CD4-positive, alpha-beta memory T cell (primary cell): ENCODE measurements at regions of chr20 and their contacts with region 1.

Region 1: GRCh38 chr20:36199345-36200257 is 36.7 kb upstream of the AAR2 start:
- DNase-seq: peak; percentile 50 to 62 (median 58)
- H3K4me3 ChIP-seq: no peak overlapping the region
- H3K4me3 Mint-ChIP-seq: no peak overlapping the region
- H3K27ac ChIP-seq: no peak overlapping the region
- H3K27ac Mint-ChIP-seq: no peak overlapping the region
- H3K4me1 ChIP-seq: peaks cover 3% of the 10 kb centered on the region
- H3K4me1 Mint-ChIP-seq: peaks cover 3 to 6% (median 4%) of the 10 kb centered on the region in 4 donors
- H3K27me3 ChIP-seq: no peaks in the 10 kb centered on the region
- H3K27me3 Mint-ChIP-seq: peaks cover 6 to 16% of the 10 kb centered on the region in 2 donors

Region 2: DNA sequence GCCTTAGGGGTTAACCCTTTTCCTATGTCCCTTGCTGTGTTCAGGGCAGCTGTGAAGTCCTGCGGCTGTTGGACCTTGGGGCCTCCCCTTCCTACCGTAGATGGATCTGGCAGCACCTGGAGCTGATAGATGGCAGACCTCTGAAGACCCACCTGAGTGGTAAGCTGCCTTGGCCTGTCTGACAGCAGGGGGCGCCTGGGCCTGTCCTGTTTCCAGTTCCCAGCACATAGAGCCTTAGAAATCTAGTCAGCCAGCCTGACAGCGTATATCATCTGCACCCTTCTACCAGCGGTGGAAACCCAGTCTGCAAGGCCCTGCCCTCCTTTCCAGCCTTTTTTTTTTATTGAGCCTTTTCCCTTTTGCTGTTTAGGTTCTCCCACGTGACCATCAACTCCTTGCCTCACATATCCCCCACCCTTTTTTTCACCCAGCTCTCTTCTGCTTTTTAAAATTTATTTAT is 204.6 kb before region 1 on chr20:
- CTCF ChIA-PET with region 1: interaction called, 14 read pairs
- POLR2A ChIA-PET with region 1: no interaction called
- intact Hi-C with region 1: loop called (anchors 1 kb)
- DNase-seq: peak; percentile 70 to 74 (median 71)
- H3K4me3 ChIP-seq: no peak overlapping the region
- H3K4me3 Mint-ChIP-seq: peak overlapping the region in 1 of 8 donors; percentile 2
- H3K27ac ChIP-seq: no peak overlapping the region
- H3K27ac Mint-ChIP-seq: peak overlapping the region in 2 of 7 donors; percentile 42 to 48
- H3K4me1 ChIP-seq: peaks cover 3% of the 10 kb centered on the region
- H3K4me1 Mint-ChIP-seq: peaks cover 5 to 8% (median 6%) of the 10 kb centered on the region in 4 donors
- H3K27me3 ChIP-seq: no peaks in the 10 kb centered on the region
- H3K27me3 Mint-ChIP-seq: peaks cover 3 to 5% of the 10 kb centered on the region in 2 donors

Region 3: GRCh38 chr20:36183155-36183944 is 16.3 kb before region 1 on chr20:
- CTCF ChIA-PET with region 1: interaction called, 11 read pairs
- POLR2A ChIA-PET with region 1: no interaction called
- intact Hi-C with region 1: no loop called
- DNase-seq: no peak
- H3K4me3 ChIP-seq: no peak overlapping the region
- H3K4me3 Mint-ChIP-seq: no peak overlapping the region
- H3K27ac ChIP-seq: no peak overlapping the region
- H3K27ac Mint-ChIP-seq: no peak overlapping the region
- H3K4me1 ChIP-seq: no peaks in the 10 kb centered on the region
- H3K4me1 Mint-ChIP-seq: no peaks in the 10 kb centered on the region
- H3K27me3 ChIP-seq: no peaks in the 10 kb centered on the region
- H3K27me3 Mint-ChIP-seq: no peaks in the 10 kb centered on the region

Region 4: GRCh38 chr20:36439040-36439730 is 239.6 kb after region 1 on chr20:
- CTCF ChIA-PET with region 1: interaction called, 58 read pairs
- POLR2A ChIA-PET with region 1: no interaction called
- intact Hi-C with region 1: loop called (anchors 1 kb)
- DNase-seq: peak in 4 of 5 donors; percentile 36 to 49 (median 38)
- H3K4me3 ChIP-seq: no peak overlapping the region
- H3K4me3 Mint-ChIP-seq: peak overlapping the region in 1 of 8 donors; percentile 40
- H3K27ac ChIP-seq: no peak overlapping the region
- H3K27ac Mint-ChIP-seq: peak overlapping the region in 2 of 7 donors; percentile 3 to 30
- H3K4me1 ChIP-seq: no peaks in the 10 kb centered on the region
- H3K4me1 Mint-ChIP-seq: peaks cover 3 to 13% (median 8%) of the 10 kb centered on the region in 4 donors
- H3K27me3 ChIP-seq: no peaks in the 10 kb centered on the region
- H3K27me3 Mint-ChIP-seq: no peaks in the 10 kb centered on the region

Region 5: DNA sequence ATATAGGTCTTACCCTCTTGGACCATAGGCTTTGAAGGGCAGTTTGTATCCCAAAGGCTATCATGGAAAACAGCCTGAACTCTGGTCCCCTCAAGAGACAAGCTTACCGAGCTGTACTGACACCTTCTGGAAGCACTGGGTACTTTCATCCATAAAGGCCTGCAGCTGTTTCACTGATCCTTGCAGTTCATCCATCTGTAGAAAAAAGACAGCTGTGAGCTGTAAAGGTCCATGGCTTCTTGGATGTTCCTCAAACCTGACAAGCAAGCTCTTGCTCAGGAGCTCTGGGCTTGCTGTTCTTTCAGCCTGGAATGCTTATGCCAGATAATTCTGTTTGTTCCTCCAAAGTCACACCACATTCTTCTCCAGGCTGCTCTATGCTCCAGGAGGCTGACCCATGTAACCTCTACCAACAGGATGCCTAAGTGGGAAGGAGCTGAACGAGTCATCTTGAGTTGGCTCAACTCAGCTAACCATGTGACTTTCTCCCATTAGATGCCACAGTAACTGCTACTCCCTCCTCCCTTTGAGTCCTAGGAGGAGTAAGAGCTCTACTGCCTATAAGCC is 555.1 kb after region 1 on chr20:
- CTCF ChIA-PET with region 1: interaction called, 11 read pairs
- POLR2A ChIA-PET with region 1: no interaction called
- intact Hi-C with region 1: no loop called
- DNase-seq: peak; percentile 46 to 50 (median 48)
- H3K4me3 ChIP-seq: no peak overlapping the region
- H3K4me3 Mint-ChIP-seq: no peak overlapping the region
- H3K27ac ChIP-seq: no peak overlapping the region
- H3K27ac Mint-ChIP-seq: peak overlapping the region in 3 of 7 donors; percentile 13 to 55 (median 47)
- H3K4me1 ChIP-seq: no peaks in the 10 kb centered on the region
- H3K4me1 Mint-ChIP-seq: peaks cover 0 to 5% (median 3%) of the 10 kb centered on the region in 4 donors
- H3K27me3 ChIP-seq: no peaks in the 10 kb centered on the region
- H3K27me3 Mint-ChIP-seq: no peaks in the 10 kb centered on the region

Region 6: GRCh38 chr20:37534401-37535157 is 1335.0 kb after region 1 on chr20:
- CTCF ChIA-PET with region 1: no interaction called
- POLR2A ChIA-PET with region 1: no interaction called
- intact Hi-C with region 1: loop called (anchors 5 kb)
- DNase-seq: peak; percentile 51 to 69 (median 67)
- H3K4me3 ChIP-seq: no peak overlapping the region
- H3K4me3 Mint-ChIP-seq: peak overlapping the region in 2 of 8 donors; percentile 28 to 46
- H3K27ac ChIP-seq: no peak overlapping the region
- H3K27ac Mint-ChIP-seq: peak overlapping the region in 2 of 7 donors; percentile 31 to 57
- H3K4me1 ChIP-seq: no peaks in the 10 kb centered on the region
- H3K4me1 Mint-ChIP-seq: peaks cover 0 to 5% (median 3%) of the 10 kb centered on the region in 4 donors
- H3K27me3 ChIP-seq: no peaks in the 10 kb centered on the region
- H3K27me3 Mint-ChIP-seq: peaks cover 5 to 12% of the 10 kb centered on the region in 2 donors